PC-9 (cell line): ENCODE measurements at regions of chr9 and their contacts with region 1.

Region 1: GRCh38 chr9:93245122-93245970 is 61.4 kb downstream of the WNK2 start:
- DNase-seq: peak; percentile 70 to 79
- H3K4me3 ChIP-seq: no peak overlapping the region
- H3K27ac ChIP-seq: peak overlapping the region; percentile 90
- H3K4me1 ChIP-seq: peaks cover 43% of the 10 kb centered on the region
- H3K27me3 ChIP-seq: no peaks in the 10 kb centered on the region
- CTCF ChIP-seq: no peak

Region 2: DNA sequence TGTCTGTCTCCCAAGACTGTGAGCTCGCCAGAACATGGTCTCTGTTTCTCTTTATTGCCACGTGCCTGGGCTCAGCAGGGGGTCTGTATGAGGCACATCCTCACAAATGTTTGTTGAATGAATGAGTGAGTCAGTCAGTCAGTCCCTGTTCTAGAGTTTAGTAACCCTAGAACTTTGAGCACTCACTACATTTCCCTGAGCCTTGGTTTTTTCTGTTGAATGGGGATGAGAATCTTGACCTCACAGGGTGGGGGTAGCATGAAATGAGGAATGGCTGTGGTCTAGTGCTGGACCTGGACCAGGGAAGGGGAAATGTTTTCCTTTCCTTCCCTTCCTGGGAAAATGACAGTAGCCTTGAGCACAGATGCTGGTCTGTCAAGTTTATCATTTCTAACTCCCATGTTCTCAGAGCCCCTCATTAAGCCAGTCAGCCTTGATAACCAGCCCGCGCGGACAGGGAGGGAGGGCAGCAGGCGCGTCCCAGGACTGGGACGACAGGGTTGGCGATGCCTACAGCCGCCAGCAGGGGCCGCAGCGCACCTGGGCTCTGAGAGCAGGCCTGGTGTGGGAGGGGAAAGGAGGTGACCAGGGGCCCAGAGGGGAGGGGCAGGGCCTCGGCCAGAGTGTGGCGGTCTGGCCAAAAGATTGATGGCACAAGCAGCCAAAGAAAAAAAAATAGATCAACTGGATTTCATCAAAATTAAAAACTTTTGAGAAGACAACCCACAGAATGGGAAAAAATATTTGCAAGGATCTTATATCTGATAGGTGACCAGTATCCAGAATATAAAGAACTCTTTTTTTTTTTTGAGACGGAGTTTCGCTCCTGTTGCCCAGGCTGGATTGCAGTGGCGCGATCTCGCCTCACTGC is 85.5 kb before region 1 on chr9:
- CTCF ChIA-PET with region 1: no interaction called
- POLR2A ChIA-PET with region 1: no interaction called
- intact Hi-C with region 1: loop called (anchors 1 kb)
- DNase-seq: peak; percentile 60 to 95
- H3K4me3 ChIP-seq: no peak overlapping the region
- H3K27ac ChIP-seq: no peak overlapping the region
- H3K4me1 ChIP-seq: no peaks in the 10 kb centered on the region; the same call in 1 of the 2 replicates
- H3K27me3 ChIP-seq: no peaks in the 10 kb centered on the region
- CTCF ChIP-seq: peak; percentile 98

Region 3: GRCh38 chr9:93217706-93218105 is 27.6 kb before region 1 on chr9:
- CTCF ChIA-PET with region 1: no interaction called
- POLR2A ChIA-PET with region 1: interaction called, 4 read pairs
- intact Hi-C with region 1: loop called (anchors 1 kb)
- DNase-seq: peak in 1 of 2 experiments; percentile 65
- H3K4me3 ChIP-seq: no peak overlapping the region
- H3K27ac ChIP-seq: no peak overlapping the region
- H3K4me1 ChIP-seq: peaks cover 17% of the 10 kb centered on the region
- H3K27me3 ChIP-seq: no peaks in the 10 kb centered on the region
- CTCF ChIP-seq: no peak

Region 4: GRCh38 chr9:93288891-93289883 is 43.8 kb after region 1 on chr9:
- CTCF ChIA-PET with region 1: no interaction called
- POLR2A ChIA-PET with region 1: no interaction called
- intact Hi-C with region 1: loop called (anchors 1 kb)
- DNase-seq: peak; percentile 79 to 85
- H3K4me3 ChIP-seq: no peak overlapping the region
- H3K27ac ChIP-seq: peak overlapping the region; percentile 29; the same call in 1 of the 2 replicates
- H3K4me1 ChIP-seq: peaks cover 21% of the 10 kb centered on the region
- H3K27me3 ChIP-seq: no peaks in the 10 kb centered on the region
- CTCF ChIP-seq: no peak

Region 5: DNA sequence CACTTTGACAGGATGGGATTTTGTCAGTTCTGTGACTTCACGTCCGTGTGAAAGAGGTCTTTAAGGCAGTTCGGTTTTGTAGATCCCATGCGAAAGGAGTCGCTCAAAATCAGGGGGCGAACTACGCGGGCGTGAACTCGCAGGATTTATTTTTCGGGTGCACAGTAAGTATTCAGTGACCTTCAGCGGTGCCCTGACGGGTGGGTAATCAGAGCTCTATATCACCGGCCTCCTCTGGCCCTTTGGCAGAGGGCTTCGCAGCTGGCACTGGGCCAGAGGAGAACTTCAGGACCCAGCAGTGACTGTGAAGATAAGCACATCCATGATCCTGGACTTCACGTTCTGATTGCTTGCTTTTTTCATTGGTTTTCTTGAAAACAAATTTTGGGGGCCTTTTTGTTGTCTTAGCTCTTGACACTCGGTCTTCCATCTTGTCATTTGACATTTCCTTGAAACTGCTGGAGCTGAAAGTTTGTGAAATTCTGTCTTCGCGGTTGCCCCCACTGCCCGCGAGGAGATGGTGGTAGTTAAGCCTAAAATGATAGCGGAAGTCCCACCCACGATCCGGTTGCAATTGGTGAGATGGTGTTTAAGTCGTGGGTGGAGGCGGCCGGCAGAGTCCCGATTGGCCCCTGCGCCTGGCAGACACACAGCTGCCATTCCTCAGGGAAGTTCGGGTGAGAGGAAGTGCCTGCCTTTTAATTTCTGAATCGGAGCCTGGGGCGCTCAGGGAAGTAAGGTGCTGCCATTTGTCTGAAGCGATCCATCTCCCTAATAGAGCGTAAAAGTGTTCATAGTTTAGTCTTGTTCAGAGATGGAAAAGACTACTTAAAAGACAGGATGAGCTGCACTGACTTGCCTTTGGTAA is 207.9 kb after region 1 on chr9 and contains the start of gene FAM120AOS:
- CTCF ChIA-PET with region 1: no interaction called
- POLR2A ChIA-PET with region 1: no interaction called
- intact Hi-C with region 1: no loop called
- DNase-seq: peak; percentile 93 to 94
- H3K4me3 ChIP-seq: peak within 1 kb of the TSS; percentile 74
- H3K27ac ChIP-seq: peak within 1 kb of the TSS; percentile 42
- H3K4me1 ChIP-seq: peaks cover 31% of the 10 kb centered on the region
- H3K27me3 ChIP-seq: no peaks in the 10 kb centered on the region
- CTCF ChIP-seq: no peak
- total RNA-seq, gene FAM120AOS: 27.8 and 34.6 TPM in 2 replicates

Region 6: GRCh38 chr9:93505541-93506132 is 260.3 kb after region 1 on chr9:
- CTCF ChIA-PET with region 1: no interaction called
- POLR2A ChIA-PET with region 1: no interaction called
- intact Hi-C with region 1: no loop called
- DNase-seq: no peak
- H3K4me3 ChIP-seq: no peak overlapping the region
- H3K27ac ChIP-seq: peak overlapping the region; percentile 28
- H3K4me1 ChIP-seq: peaks cover 14% of the 10 kb centered on the region; the same call in 1 of the 2 replicates
- H3K27me3 ChIP-seq: no peaks in the 10 kb centered on the region
- CTCF ChIP-seq: no peak